PC-3 (cell line): ENCODE measurements at regions of chr21 and their contacts with region 1.

Region 1: GRCh38 chr21:24514081-24514733 is 1093.1 kb downstream of the MRPL39 start:
- DNase-seq: peak; percentile 57
- ATAC-seq: no peak
- H3K4me3 ChIP-seq: no peak overlapping the region
- H3K27ac ChIP-seq: no peak overlapping the region
- H3K4me1 ChIP-seq: no peaks in the 10 kb centered on the region
- H3K27me3 ChIP-seq: no peaks in the 10 kb centered on the region
- CTCF ChIP-seq: peak; percentile 88

Region 2: GRCh38 chr21:23853796-23854379 is 660.3 kb before region 1 on chr21:
- CTCF ChIA-PET with region 1: no interaction called
- POLR2A ChIA-PET with region 1: no interaction called
- intact Hi-C with region 1: loop called (anchors 2 kb)
- DNase-seq: peak; percentile 63
- ATAC-seq: peak; percentile 94
- H3K4me3 ChIP-seq: no peak overlapping the region
- H3K27ac ChIP-seq: no peak overlapping the region
- H3K4me1 ChIP-seq: no peaks in the 10 kb centered on the region
- H3K27me3 ChIP-seq: no peaks in the 10 kb centered on the region
- CTCF ChIP-seq: peak; percentile 75

Region 3: GRCh38 chr21:24023402-24023801 is 490.8 kb before region 1 on chr21:
- CTCF ChIA-PET with region 1: no interaction called
- POLR2A ChIA-PET with region 1: no interaction called
- intact Hi-C with region 1: loop called (anchors 10 kb)
- DNase-seq: peak; percentile 81
- ATAC-seq: peak; percentile 98
- H3K4me3 ChIP-seq: peak overlapping the region; percentile 5; the same call in 1 of the 2 replicates
- H3K27ac ChIP-seq: peak overlapping the region; percentile 76
- H3K4me1 ChIP-seq: peaks cover 15% of the 10 kb centered on the region
- H3K27me3 ChIP-seq: no peaks in the 10 kb centered on the region
- CTCF ChIP-seq: no peak

Region 4: GRCh38 chr21:24375201-24375600 is 139.0 kb before region 1 on chr21:
- CTCF ChIA-PET with region 1: no interaction called
- POLR2A ChIA-PET with region 1: no interaction called
- intact Hi-C with region 1: loop called (anchors 2 kb)
- DNase-seq: no peak
- ATAC-seq: no peak
- H3K4me3 ChIP-seq: no peak overlapping the region
- H3K27ac ChIP-seq: no peak overlapping the region
- H3K4me1 ChIP-seq: no peaks in the 10 kb centered on the region
- H3K27me3 ChIP-seq: no peaks in the 10 kb centered on the region
- CTCF ChIP-seq: peak; percentile 41; the same call in 1 of the 2 replicates

Region 5: GRCh38 chr21:24436236-24436635 is 78.0 kb before region 1 on chr21:
- CTCF ChIA-PET with region 1: no interaction called
- POLR2A ChIA-PET with region 1: no interaction called
- intact Hi-C with region 1: no loop called
- DNase-seq: no peak
- ATAC-seq: no peak
- H3K4me3 ChIP-seq: no peak overlapping the region
- H3K27ac ChIP-seq: no peak overlapping the region
- H3K4me1 ChIP-seq: no peaks in the 10 kb centered on the region
- H3K27me3 ChIP-seq: no peaks in the 10 kb centered on the region
- CTCF ChIP-seq: no peak

Region 6: DNA sequence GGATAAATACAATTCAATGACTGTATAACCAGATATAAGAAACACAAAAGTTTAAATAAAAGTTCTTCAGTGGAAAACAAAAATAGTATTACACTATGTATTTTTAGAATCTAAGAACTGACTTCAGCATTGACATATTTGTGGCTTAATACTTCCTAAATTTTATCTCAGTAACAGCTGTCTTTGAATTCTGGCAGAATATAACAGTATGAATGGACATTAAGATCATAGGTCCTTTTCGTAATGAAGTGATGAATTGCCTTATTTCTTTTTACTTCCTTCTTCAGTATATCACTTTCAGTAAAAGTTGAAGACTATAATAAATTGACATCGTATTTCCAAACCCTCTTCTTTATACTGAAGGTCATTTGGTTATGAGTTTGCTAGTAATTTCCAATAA is 63.1 kb after region 1 on chr21:
- CTCF ChIA-PET with region 1: no interaction called
- POLR2A ChIA-PET with region 1: no interaction called
- intact Hi-C with region 1: no loop called
- DNase-seq: no peak
- ATAC-seq: no peak
- H3K4me3 ChIP-seq: no peak overlapping the region
- H3K27ac ChIP-seq: no peak overlapping the region
- H3K4me1 ChIP-seq: no peaks in the 10 kb centered on the region
- H3K27me3 ChIP-seq: no peaks in the 10 kb centered on the region
- CTCF ChIP-seq: no peak

Region 7: DNA sequence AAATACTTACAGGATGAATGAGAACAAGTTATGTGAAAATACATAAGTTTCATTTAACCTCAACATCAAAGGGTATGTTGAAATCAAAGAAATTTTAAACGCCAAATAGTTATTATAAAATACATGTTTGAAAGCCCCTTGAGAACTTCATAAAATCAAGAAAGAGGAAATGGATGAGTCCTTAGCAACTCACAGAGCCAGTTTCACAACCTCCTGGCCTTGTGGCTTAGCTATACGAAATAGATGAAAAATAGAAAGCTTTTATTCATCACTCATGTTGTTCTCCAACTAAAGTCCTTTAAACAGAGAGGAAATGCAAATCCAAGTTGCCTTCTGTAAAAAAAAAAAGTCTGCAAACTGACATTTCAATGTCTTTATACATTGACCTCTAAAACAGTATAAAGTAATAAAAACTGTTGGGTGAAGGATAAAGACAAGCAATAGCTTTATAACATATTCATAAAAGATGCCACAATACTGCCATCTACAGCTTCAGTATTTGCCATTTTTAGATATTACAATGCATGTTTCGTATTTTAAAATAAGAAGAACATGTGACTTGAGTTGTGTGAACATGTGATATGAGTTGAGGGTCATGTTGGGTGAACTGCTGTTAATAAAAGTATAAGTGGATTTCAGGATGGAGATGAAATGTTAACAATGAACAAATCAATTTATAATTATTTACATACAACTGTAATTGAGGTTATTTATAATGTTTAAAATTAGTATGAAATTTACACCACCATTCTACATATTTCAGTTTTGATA is 245.3 kb after region 1 on chr21:
- CTCF ChIA-PET with region 1: interaction called, 3 read pairs
- POLR2A ChIA-PET with region 1: no interaction called
- intact Hi-C with region 1: loop called (anchors 5 kb)
- DNase-seq: peak; percentile 40
- ATAC-seq: peak; percentile 37; the same call in 1 of the 2 replicates
- H3K4me3 ChIP-seq: no peak overlapping the region
- H3K27ac ChIP-seq: no peak overlapping the region
- H3K4me1 ChIP-seq: no peaks in the 10 kb centered on the region
- H3K27me3 ChIP-seq: no peaks in the 10 kb centered on the region
- CTCF ChIP-seq: peak; percentile 41; the same call in 1 of the 2 replicates